Posterior cingulate gyrus (tissue), 11 donors: ENCODE measurements at regions of chr1 and their contacts with region 1.

Region 1: DNA sequence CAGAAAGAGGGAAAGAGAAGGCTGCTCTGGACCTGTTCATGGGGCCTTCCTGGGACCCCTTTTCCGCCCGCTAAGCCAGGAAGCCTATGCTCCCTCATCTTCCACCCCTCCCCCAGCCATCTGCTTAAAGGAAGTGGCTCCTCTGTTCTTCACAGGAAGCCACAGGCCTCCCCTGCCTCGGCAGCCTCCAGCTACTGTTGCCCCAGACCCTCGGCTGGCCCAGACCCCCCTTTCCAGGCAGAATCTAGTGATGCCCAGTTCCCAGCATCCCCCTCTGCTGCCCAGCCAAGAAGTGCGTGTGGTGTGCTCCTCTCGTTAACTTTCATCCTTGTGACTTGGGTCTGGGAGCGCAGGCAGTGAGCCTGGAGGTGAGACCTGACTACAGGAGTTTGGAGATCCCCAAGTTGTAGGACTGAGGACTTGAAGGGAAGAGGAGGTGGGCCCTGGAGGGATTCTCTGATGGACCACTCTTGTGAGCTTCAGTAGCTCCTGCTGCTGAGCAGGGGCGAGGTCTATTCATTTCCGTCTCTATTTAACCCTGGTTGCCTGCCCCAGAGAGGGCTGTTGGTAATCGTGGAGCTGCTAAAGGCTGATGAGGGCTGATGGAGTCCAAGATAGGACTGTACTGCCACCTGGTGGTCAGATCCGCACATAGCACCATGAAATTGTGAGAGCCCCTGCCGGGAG is 9.1 kb downstream of the IFI6 start:
- DNase-seq: peak; percentile 68 to 97 (median 89)

Region 2: GRCh38 chr1:27300341-27301051 is 362.4 kb before region 1 on chr1:
- intact Hi-C with region 1: loop called (anchors 2 kb)
- DNase-seq: peak; percentile 77 to 98 (median 82)

Region 3: DNA sequence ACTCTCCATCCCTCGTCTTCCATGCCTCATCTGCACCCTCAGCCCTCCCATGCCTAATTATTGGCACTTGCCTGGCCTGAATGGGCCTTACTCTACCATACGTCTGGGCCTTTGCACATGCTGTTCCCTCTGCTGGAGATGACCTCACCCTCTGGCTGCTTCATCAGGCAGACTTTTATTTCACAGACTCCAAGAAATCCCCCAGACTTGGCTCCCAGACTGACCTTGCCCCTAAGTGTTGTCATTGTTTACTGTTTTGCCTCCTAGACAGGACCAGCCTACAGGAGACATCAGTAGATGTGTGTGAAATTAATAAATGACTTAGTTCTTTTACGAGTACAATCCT is 53.7 kb before region 1 on chr1:
- intact Hi-C with region 1: loop called (anchors 1 kb)
- DNase-seq: peak in 1 of 10 donors; percentile 28